ENCODE measurements at regions of chr11 and their contacts with region 1.

Region 1: DNA sequence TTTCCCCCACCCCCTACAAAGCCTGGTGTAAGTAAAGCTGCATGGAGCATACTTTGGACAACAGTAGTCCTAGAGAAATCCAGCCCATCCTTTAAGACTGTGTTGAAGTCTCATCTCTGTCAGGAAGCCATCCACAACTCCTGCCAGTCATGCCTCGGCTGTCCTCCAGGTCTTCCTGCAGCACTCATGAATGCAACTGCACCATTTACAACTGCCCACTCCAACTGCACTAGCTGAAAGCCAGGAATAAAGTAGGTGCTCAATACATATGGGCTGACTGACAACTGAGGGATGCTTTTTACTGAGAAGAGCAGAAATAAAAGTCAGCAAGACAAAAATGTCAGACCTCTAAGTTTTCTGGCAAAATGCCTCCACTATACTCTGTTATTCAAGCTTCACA is 27.4 kb downstream of the IL18BP start:
- DNase-seq: no peak

Region 2: DNA sequence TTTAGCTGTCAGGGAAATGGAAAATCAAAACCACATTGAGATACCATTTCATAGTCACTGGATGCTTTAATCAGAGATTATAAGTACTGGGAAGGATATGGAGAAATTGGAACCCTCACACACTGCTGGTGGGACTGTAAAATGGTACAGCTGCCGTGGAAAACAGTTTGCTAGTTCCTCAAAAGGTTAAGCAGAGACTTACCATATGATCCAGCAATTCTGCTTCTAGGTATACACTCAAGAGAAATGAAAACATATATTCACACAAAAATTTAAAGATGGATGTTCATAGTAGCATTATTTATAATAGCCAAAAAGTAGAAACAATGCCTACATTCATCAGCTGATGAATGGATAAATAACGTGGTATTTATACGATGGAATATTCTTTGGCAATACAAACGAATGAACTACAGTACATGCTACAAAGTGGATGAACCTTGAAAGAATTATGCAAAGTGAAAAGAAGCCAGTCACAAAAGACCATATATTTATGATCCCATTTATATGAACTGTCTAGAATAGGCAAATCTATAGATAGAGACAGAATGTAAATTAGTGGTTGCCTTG is 74.3 kb before region 1 on chr11:
- in situ Hi-C with region 1: loop called (anchors 10 kb)
- DNase-seq: peak; percentile 96

Region 3: DNA sequence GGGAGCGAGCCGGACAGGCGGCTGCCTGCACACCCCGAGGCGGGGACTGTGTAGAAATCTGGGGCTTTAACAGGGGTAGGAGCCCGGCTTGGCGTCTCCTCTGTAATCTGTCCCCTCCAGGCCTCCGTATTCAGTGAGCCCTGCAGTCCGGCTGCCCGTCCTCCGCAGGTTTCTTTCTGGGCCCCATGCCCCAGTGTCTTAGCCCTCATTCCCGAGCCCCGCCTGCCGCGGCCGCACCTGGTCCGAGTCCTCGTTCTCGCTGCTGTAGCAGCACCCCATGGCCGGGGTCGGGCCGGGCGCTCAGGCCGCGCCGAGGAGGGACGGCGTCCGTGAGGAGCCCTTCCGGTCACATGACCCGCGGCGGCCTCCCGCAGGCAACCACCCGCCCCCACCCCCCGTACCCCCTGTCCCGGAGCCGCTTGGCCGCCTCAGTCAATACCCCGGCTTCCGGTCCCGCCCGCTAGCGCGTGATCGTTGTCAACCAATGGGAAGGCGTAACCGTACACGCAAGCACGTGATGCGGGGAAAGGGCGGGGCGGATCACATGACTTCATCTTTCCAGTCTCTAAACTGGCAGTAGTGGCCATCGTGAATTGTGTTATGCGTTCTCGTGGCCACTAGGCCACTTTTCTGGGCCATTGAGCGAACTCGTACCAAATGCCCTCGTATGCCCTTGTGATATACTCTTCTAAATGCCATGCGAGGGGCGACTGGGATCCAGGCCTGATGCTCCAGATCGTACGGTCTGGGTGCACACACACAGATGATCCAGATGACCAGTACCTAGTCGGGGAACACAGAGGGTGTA is 77.1 kb after region 1 on chr11 and contains the start of gene LAMTOR1:
- in situ Hi-C with region 1: loop called (anchors 5 kb)
- DNase-seq: peak; percentile 100
- total RNA-seq, gene LAMTOR1: 279 and 297 TPM in 2 replicates